Prostate gland (tissue), 2 donors: ENCODE measurements at regions of chr10 and their contacts with region 1.

Region 1: GRCh38 chr10:19819419-19820033 is 3.3 kb downstream of the PLXDC2 start:
- DNase-seq: peak; percentile 71
- H3K4me3 ChIP-seq: no peak overlapping the region
- H3K27ac ChIP-seq: no peak overlapping the region
- H3K4me1 ChIP-seq: no peaks in the 10 kb centered on the region
- H3K27me3 ChIP-seq: no peaks in the 10 kb centered on the region
- CTCF ChIP-seq: peak; percentile 55 to 92 (median 87)
- POLR2A ChIP-seq: no peak

Region 2: DNA sequence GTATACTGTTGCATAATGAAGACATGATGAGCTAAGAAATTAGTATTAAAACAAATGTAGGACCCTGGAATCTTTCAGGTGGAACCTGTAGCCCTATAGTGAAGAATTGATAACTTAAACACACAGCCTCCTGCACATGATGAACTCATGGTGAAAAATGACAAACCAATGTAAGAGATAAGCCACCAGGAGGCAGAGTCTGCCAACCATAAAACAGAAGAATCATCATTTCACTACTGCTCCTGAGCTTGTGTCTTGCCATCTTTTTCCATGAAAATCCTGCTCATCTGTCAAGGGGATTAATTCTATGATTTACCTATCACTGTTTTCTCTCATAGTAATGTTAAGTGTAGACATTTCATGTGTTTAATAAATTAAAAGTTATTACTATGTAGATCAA is 407.0 kb before region 1 on chr10:
- intact Hi-C with region 1: loop called (anchors 10 kb)
- DNase-seq: peak; percentile 31
- H3K4me3 ChIP-seq: no peak overlapping the region
- H3K27ac ChIP-seq: no peak overlapping the region
- H3K4me1 ChIP-seq: no peaks in the 10 kb centered on the region
- H3K27me3 ChIP-seq: no peaks in the 10 kb centered on the region
- CTCF ChIP-seq: peak in 3 of 4 experiments; percentile 48 to 64 (median 57)
- POLR2A ChIP-seq: no peak

Region 3: GRCh38 chr10:19922236-19922963 is 102.9 kb after region 1 on chr10:
- intact Hi-C with region 1: loop called (anchors 10 kb)
- DNase-seq: peak; percentile 49
- H3K4me3 ChIP-seq: no peak overlapping the region
- H3K27ac ChIP-seq: peak overlapping the region; percentile 57 to 61
- H3K4me1 ChIP-seq: peaks cover 3% of the 10 kb centered on the region
- H3K27me3 ChIP-seq: no peaks in the 10 kb centered on the region
- CTCF ChIP-seq: no peak
- POLR2A ChIP-seq: no peak

Region 4: GRCh38 chr10:20202337-20202736 is 382.8 kb after region 1 on chr10:
- intact Hi-C with region 1: no loop called
- DNase-seq: no peak
- H3K4me3 ChIP-seq: no peak overlapping the region
- H3K27ac ChIP-seq: no peak overlapping the region
- H3K4me1 ChIP-seq: no peaks in the 10 kb centered on the region
- H3K27me3 ChIP-seq: no peaks in the 10 kb centered on the region
- CTCF ChIP-seq: no peak
- POLR2A ChIP-seq: no peak

Region 5: DNA sequence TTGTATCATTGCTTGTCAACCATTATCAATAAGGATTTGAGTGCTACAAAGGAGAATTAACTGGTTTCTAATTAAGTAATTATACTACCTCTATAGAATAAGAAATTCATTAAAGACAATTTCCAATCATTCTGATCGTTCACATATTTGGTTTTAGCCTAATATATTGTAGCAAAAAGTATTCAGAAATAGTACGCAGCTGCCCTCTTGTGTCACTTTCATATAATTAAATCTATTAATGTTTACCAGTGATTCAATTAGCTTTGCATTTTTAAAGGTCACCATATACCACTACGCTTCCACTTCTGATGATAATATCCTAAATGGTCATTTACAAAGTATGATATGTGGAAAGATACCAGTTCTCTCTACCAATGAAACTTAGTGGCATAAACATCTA is 949.3 kb after region 1 on chr10:
- intact Hi-C with region 1: loop called (anchors 5 kb)
- DNase-seq: no peak
- H3K4me3 ChIP-seq: no peak overlapping the region
- H3K27ac ChIP-seq: no peak overlapping the region
- H3K4me1 ChIP-seq: no peaks in the 10 kb centered on the region
- H3K27me3 ChIP-seq: no peaks in the 10 kb centered on the region
- CTCF ChIP-seq: peak in 3 of 4 experiments; percentile 11 to 45 (median 44)
- POLR2A ChIP-seq: no peak